Right cardiac atrium (tissue), 5 donors: ENCODE measurements at regions of chr16 and their contacts with region 1.

Region 1: GRCh38 chr16:58418601-58419000 is 26.3 kb downstream of the GINS3 start:
- DNase-seq: peak; percentile 57 to 79 (median 69)
- ATAC-seq: peak; percentile 83 to 88
- H3K4me3 ChIP-seq: no peak overlapping the region
- H3K27ac ChIP-seq: peak overlapping the region; percentile 98
- H3K4me1 ChIP-seq: no peaks in the 10 kb centered on the region
- H3K27me3 ChIP-seq: no peaks in the 10 kb centered on the region

Region 2: DNA sequence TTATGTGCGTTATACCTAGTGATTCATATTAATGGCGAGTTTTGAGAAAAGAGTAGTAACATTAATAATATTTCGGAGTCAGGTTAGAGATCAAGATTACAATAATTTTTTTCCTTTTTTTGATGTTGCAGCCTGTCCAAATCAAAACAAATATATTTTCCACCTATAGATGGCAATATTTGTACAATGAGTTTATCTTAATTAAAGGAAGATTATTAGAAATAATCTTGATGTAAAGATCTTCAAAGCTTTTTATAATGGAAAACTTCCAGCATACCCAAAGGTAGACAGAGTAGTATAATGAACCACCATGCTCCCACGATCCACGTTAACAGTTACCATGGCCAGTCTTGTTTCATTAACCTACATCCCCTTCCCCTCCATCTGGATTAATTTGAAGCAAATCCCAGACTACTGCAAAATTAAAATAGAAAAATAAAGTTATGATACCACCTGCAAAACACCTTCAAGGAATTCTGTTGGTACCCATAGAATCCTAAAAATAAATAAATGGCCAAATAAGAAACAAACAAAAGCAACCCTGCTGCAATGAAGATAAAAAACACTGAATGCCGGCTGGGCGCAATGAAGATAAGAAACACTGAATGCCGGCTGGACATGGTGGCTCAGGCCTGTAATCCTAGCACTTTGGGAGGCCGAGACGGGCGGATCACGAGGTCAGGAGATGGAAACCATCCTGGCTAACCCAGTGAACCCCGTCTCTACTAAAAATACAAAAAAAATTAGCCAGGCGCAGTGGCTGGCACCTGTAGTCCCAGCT is 72.8 kb before region 1 on chr16:
- intact Hi-C with region 1: loop called in 1 of 4 experiments (anchors 10 kb)
- DNase-seq: no peak
- ATAC-seq: no peak
- H3K4me3 ChIP-seq: no peak overlapping the region
- H3K27ac ChIP-seq: no peak overlapping the region
- H3K4me1 ChIP-seq: peaks cover 7% of the 10 kb centered on the region
- H3K27me3 ChIP-seq: no peaks in the 10 kb centered on the region

Region 3: DNA sequence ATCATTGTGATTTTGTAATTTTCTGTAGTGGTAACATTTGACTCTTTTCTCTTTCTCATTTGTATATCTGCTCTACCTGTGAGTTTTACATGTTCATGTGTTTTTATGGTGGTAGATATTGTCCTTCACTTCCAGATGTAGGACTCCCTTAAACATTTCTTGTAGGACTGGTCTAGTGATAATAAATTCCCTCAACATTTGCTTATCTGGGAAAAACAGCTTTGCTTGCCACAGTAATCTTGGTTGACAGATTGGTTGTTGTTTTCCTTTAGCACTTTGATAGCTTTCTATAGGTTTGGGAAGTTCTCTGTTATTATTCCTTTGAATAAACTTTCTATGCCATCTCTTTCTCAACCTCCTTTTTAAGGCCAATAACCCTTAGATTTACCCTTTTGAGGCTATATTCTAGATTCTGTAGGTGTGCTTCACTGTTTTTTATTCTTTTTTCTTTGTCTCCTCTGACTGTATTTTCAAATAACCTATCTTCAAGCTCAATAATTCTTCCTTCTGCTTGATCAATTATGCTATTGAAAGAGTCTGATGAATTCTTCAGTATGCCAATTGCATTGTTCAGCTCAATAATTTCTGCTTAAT is 58.5 kb before region 1 on chr16:
- intact Hi-C with region 1: no loop called
- DNase-seq: no peak
- ATAC-seq: no peak
- H3K4me3 ChIP-seq: no peak overlapping the region
- H3K27ac ChIP-seq: no peak overlapping the region
- H3K4me1 ChIP-seq: no peaks in the 10 kb centered on the region
- H3K27me3 ChIP-seq: no peaks in the 10 kb centered on the region

Region 4: GRCh38 chr16:58487566-58488351 is 69.2 kb after region 1 on chr16:
- intact Hi-C with region 1: no loop called
- DNase-seq: peak; percentile 89 to 95 (median 94)
- ATAC-seq: peak; percentile 78 to 88
- H3K4me3 ChIP-seq: no peak overlapping the region
- H3K27ac ChIP-seq: no peak overlapping the region
- H3K4me1 ChIP-seq: peaks cover 3% of the 10 kb centered on the region
- H3K27me3 ChIP-seq: no peaks in the 10 kb centered on the region